ENCODE measurements at regions of chr5 and their contacts with region 1.

Region 1: DNA sequence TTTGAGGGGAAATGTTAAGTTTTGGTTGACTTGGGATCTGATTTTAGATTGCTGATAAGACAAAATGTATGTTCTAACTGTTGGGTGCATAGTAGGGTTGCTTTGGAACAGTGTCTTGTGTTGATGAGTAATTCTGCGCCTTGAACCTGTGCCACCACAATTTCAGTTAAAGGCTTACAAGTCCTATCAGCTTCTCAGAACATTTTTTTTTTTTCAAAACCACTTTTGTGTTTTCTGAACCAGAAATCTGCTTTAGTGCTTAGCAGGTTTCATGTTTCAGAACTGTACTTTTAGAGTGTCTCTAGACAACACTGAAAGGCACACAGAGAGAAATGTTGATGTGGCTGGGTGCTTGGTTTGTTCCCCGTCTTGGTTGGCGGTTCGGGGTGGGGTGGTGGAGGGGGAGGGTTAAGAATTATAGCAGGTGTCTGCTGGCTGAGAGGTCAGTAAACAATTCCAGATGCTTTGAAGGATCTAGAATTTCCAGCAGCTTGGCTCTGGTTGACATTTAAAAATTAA is 84.6 kb downstream of the ANKRD55 start:
- DNase-seq: peak; percentile 76
- H3K4me3 Mint-ChIP-seq: peak overlapping the region; percentile 29
- H3K27ac Mint-ChIP-seq: peak overlapping the region; percentile 79
- H3K4me1 Mint-ChIP-seq: peaks cover 67% of the 10 kb centered on the region
- H3K27me3 Mint-ChIP-seq: no peaks in the 10 kb centered on the region

Region 2: GRCh38 chr5:55982957-55983381 is 165.5 kb before region 1 on chr5:
- CTCF ChIA-PET with region 1: interaction called, 3 read pairs
- POLR2A ChIA-PET with region 1: interaction called, 3 read pairs
- intact Hi-C with region 1: loop called (anchors 1 kb)
- DNase-seq: no peak
- H3K4me3 Mint-ChIP-seq: peak overlapping the region; percentile 20
- H3K27ac Mint-ChIP-seq: peak overlapping the region; percentile 64
- H3K4me1 Mint-ChIP-seq: peaks cover 80% of the 10 kb centered on the region
- H3K27me3 Mint-ChIP-seq: no peaks in the 10 kb centered on the region

Region 3: GRCh38 chr5:56128113-56128512 is 20.4 kb before region 1 on chr5:
- CTCF ChIA-PET with region 1: no interaction called
- POLR2A ChIA-PET with region 1: no interaction called
- intact Hi-C with region 1: loop called (anchors 1 kb)
- DNase-seq: peak; percentile 77
- H3K4me3 Mint-ChIP-seq: peak overlapping the region; percentile 44
- H3K27ac Mint-ChIP-seq: peak overlapping the region; percentile 85
- H3K4me1 Mint-ChIP-seq: peaks cover 60% of the 10 kb centered on the region
- H3K27me3 Mint-ChIP-seq: no peaks in the 10 kb centered on the region

Region 4: GRCh38 chr5:56168066-56168478 is 19.6 kb after region 1 on chr5:
- CTCF ChIA-PET with region 1: interaction called, 3 read pairs
- POLR2A ChIA-PET with region 1: no interaction called
- intact Hi-C with region 1: loop called (anchors 2 kb)
- DNase-seq: no peak
- H3K4me3 Mint-ChIP-seq: no peak overlapping the region
- H3K27ac Mint-ChIP-seq: peak overlapping the region; percentile 45
- H3K4me1 Mint-ChIP-seq: peaks cover 35% of the 10 kb centered on the region
- H3K27me3 Mint-ChIP-seq: peaks cover 1% of the 10 kb centered on the region

Region 5: GRCh38 chr5:56233230-56233629 is 84.7 kb after region 1 on chr5 and contains the start of gene ANKRD55:
- CTCF ChIA-PET with region 1: no interaction called
- POLR2A ChIA-PET with region 1: no interaction called
- intact Hi-C with region 1: no loop called
- DNase-seq: no peak
- H3K4me3 Mint-ChIP-seq: no peak within 1 kb of the TSS
- H3K27ac Mint-ChIP-seq: no peak within 1 kb of the TSS
- H3K4me1 Mint-ChIP-seq: peaks cover 5% of the 10 kb centered on the region
- H3K27me3 Mint-ChIP-seq: no peaks in the 10 kb centered on the region
- total RNA-seq, gene ANKRD55: 2.2 to 2.6 TPM

Measured in activated CD4-positive, alpha-beta memory T cell treated with anti-CD3 and anti-CD28 coated beads for 36 hours (primary cell).